Heart right ventricle (tissue), 16 donors: ENCODE measurements at regions of chrX and their contacts with region 1.

Region 1: DNA sequence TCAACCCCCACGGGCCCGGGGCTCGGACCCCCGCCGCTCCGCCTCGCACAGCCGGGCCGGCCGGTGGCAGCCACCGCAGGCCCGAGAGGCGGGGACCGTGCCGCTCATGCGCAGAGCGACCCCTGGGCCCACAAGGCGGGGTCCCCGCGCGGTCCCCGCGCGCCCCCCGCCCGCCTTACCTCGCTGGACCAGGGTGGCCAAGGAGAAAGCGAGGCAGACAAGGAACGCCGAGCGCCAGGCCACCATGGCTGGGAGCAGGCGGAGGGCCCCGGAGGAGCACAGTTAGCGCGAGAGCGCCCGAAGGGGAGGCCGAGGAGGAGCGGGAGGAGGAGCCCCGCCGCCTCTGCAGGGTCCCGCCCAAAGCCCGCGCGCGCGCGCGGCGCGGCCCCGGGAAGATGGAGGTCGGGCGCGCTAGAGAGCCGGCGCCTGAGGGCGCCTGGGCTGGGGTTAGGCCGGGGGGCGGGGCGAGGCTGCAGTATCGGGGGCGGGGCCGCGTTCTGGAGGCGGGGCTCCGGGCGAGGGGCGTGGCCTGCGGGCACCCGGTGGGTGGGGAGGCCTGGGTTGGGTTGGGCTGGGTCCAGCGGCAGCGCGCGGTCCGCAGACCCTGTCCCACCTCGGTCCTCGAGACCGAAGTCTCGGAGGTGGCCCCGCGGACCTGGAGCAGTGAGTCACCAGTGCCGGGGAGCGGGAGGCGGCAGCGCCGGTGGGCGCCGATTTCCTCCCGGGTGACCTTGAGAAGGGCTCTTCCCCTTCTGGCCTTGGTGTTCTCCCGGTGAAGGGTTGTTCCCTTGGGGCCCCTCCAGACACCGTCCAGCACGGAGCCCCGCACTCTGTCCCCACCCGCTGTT is at the start of gene CD99L2:
- DNase-seq: peak; percentile 87 to 91
- ATAC-seq: peak; percentile 96 to 99 (median 98)
- H3K4me3 ChIP-seq: peak within 1 kb of the TSS; percentile 38 to 73 (median 66)
- H3K27ac ChIP-seq: peak within 1 kb of the TSS; percentile 40 to 89 (median 82)
- H3K4me1 ChIP-seq: peaks cover 0 to 12% (median 0%) of the 10 kb centered on the region in 9 donors
- H3K27me3 ChIP-seq: no peaks in the 10 kb centered on the region
- CTCF ChIP-seq: no peak
- total RNA-seq, gene CD99L2: 67.2 to 122 (median 80.8) TPM

Region 2: DNA sequence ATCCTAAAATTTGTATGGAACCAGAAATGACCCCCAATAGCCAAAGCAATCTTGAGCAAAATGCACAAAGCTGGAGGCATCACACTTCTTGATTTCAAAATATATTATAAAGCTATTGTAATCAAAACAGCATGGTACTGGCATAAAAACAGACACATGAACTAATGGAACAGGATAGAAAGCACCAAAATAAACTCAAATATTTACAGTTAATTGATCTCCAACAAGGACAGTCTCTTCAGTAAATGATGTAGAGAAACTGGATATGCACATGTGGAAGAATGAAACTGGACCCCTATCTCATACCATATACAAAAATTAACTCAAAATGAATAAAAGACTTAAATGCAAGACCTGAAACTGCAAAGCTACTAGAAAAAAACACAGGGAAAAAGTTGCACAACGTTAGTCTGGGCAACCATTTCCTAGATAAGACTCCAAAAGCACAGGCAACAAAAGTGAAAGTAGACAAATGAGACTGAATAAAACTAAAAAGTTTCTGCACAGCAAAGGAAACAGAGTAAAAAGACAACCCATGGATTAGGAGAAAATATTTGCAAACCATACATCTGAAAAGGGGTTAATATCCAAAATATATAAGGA is 65.0 kb before region 1 on chrX:
- intact Hi-C with region 1: loop called in 1 of 10 experiments (anchors 10 kb)
- DNase-seq: no peak
- ATAC-seq: no peak
- H3K4me3 ChIP-seq: no peak overlapping the region
- H3K27ac ChIP-seq: no peak overlapping the region
- H3K4me1 ChIP-seq: no peaks in the 10 kb centered on the region
- H3K27me3 ChIP-seq: no peaks in the 10 kb centered on the region
- CTCF ChIP-seq: no peak

Region 3: GRCh38 chrX:150982788-150983520 is 84.4 kb after region 1 on chrX and contains the start of gene HMGB3:
- intact Hi-C with region 1: loop called in 1 of 10 experiments (anchors 5 kb)
- DNase-seq: peak; percentile 68 to 78
- ATAC-seq: peak; percentile 93 to 99 (median 98)
- H3K4me3 ChIP-seq: peak within 1 kb of the TSS in 9 of 10 donors; percentile 34 to 60 (median 55)
- H3K27ac ChIP-seq: peak within 1 kb of the TSS in 1 of 10 donors; percentile 61
- H3K4me1 ChIP-seq: peaks cover 0 to 6% (median 0%) of the 10 kb centered on the region in 9 donors
- H3K27me3 ChIP-seq: no peaks in the 10 kb centered on the region
- CTCF ChIP-seq: no peak
- total RNA-seq, gene HMGB3: 5.1 to 16.4 (median 13.8) TPM

Region 4: DNA sequence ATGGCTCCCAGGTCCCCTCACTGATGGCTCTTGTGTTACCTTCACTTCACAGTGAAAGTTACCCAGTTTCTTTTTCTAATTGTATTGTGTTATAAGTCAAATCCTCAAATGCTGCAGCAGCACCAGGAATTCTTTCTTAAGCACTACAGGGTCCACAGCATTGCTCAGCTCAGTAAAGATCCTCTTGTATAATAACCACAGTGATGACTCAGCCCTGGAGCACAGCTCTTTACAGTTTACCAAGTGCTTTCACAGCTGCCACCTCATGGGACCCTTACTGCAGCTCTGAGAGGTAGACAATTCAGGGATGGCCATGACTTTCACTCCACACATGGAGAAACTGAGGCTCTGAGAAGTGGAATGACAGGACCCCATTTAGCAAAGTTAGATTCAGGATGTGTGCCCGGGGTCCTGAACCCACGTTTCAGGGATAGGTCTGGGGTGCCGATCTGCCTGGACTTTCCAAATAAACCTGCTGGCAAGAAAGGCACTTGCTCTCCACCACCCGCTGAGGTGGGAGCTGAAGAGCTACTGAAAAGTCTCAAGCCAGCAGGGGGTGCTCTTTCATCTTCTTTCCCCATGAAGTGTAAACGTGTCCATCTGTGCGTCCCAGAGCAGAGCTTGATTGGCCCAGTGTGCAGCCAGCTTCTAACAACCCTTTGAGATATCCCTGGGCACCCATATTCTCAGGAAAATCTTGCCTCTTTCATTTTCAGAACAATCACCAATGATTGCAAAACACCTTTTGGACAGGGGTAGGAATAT is 1703.5 kb after region 1 on chrX:
- intact Hi-C with region 1: no loop called
- DNase-seq: no peak
- ATAC-seq: no peak
- H3K4me3 ChIP-seq: no peak overlapping the region
- H3K27ac ChIP-seq: no peak overlapping the region
- H3K4me1 ChIP-seq: no peaks in the 10 kb centered on the region
- H3K27me3 ChIP-seq: peaks cover 0 to 22% (median 0%) of the 10 kb centered on the region in 7 donors
- CTCF ChIP-seq: peak in 1 of 9 donors; percentile 11